Motor neuron (in vitro differentiated cells): ENCODE measurements at regions of chr1 and their contacts with region 1.

Region 1: GRCh38 chr1:117284399-117285215 is 73.9 kb upstream of the VTCN1 start:
- ATAC-seq: peak; percentile 77 to 94 (median 91)
- H3K4me3 ChIP-seq: no peak overlapping the region
- H3K27ac ChIP-seq: no peak overlapping the region
- H3K4me1 ChIP-seq: peaks cover 7 to 11% of the 10 kb centered on the region in 2 donors

Region 2: DNA sequence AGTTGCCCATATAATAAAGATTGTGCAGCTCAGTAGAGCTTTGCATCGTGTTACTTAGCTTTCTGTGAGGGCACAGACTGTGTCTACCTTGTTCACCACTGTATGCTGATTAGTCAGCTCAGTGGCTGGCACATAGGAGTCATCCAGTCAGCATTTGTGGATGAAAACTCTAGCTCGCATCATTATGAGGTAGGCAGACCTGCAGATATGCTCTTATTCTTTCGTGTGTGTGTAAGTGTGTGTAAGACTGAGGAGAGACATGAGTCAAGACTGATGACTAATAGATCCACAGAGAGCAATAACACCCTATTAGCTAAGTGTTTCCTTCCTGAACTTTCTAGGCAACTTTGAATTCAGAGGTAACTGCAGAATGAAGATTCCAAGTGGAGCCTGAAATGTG is 207.3 kb before region 1 on chr1:
- in situ Hi-C with region 1: loop called in 5 of 9 experiments (anchors 10 to 25 kb)
- ATAC-seq: peak in 7 of 8 experiments; percentile 67 to 99 (median 79)
- H3K4me3 ChIP-seq: no peak overlapping the region
- H3K27ac ChIP-seq: no peak overlapping the region
- H3K4me1 ChIP-seq: no peaks in the 10 kb centered on the region

Region 3: GRCh38 chr1:117093870-117094621 is 190.6 kb before region 1 on chr1:
- in situ Hi-C with region 1: loop called in 2 of 9 experiments (anchors 25 kb)
- ATAC-seq: peak in 7 of 8 experiments; percentile 15 to 67 (median 48)
- H3K4me3 ChIP-seq: no peak overlapping the region
- H3K27ac ChIP-seq: peak overlapping the region in 1 of 2 donors; percentile 47
- H3K4me1 ChIP-seq: peaks cover 33 to 48% of the 10 kb centered on the region in 2 donors

Region 4: DNA sequence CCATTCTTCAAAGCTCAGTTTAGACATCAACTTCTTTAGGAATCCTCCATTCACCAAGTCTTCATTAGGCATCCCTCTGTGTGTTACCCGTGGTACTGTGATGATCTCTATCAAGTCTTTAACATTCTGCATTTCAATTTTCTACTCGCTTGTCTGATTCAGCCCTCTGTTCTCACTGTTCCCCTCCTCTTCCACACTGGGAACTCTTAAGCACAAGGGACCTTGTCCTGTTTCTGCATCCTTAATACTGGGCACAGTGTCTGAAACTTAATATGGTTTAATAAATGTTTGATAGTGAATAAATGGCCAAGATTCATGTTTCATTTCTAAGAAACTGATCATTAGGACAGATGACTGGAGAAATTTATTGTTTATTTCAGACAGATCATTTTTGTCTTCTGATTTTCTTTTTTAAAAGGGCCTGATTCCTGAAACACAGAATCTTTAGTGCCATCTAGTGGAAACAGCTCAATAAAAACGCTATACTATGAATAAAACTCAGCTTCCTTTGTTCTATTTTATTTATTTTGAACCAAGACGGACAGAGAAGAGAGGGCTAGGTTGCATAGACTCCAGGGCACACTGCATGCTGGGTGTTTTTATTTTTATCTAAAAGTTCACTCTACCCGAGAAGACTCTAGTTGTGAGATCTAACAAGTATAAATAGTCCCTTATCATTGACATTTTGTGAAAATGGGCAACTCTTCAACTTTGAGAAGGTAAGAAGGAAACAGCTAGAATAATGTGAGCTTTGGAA is 156.1 kb before region 1 on chr1:
- in situ Hi-C with region 1: loop called in 1 of 9 experiments (anchors 25 kb)
- ATAC-seq: peak; percentile 53 to 74 (median 61)
- H3K4me3 ChIP-seq: no peak overlapping the region
- H3K27ac ChIP-seq: no peak overlapping the region
- H3K4me1 ChIP-seq: peaks cover 2 to 8% of the 10 kb centered on the region in 2 donors

Region 5: DNA sequence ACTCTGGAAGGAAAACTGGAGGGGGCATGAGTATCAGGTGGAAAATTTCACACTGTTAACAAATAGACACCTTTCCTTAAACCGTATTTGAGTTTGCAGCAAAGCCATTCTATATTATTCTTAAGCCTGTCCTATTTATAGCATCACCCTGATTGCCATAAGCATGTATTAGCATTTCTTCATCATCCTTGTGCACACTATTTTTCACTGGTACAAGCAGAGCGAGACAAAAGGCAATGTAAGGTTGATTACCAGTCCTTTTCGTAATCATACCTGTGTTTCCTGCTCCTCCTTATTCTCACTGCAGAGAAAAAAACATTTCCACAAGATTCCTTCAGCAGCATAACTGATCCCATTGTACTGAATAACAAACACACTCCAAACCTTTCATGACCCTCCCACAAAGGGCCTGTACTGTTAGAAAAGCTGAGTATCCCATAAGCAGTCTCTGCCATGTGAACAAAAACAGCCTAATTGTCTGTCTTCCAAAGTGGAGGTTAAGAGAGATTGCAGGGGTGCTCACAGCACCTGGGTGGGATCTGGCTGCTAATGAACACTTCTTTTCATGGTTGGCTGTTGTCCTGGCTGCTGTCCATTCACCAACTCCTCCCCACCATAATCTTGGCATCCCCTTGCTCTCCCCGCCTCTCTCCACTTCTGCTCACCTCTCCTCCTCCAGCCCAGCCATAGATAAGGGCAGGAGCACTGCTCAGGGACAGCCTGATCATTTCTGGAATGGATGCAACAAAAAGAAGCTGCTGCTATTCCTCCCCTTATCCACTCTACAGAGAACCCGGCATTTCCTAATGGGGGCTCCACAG is 104.2 kb before region 1 on chr1:
- in situ Hi-C with region 1: loop called in 1 of 9 experiments (anchors 25 kb)
- ATAC-seq: peak in 6 of 8 experiments; percentile 19 to 60 (median 44)
- H3K4me3 ChIP-seq: no peak overlapping the region
- H3K27ac ChIP-seq: no peak overlapping the region
- H3K4me1 ChIP-seq: peaks cover 16 to 19% of the 10 kb centered on the region in 2 donors